K562 (cell line): ENCODE measurements at regions of chr19 and their contacts with region 1.

Region 1: GRCh38 chr19:53849237-53849676 is 18.4 kb upstream of the MYADM start:
- DNase-seq: no peak
- ATAC-seq: no peak
- H3K4me3 ChIP-seq: no peak overlapping the region
- H3K27ac ChIP-seq: no peak overlapping the region
- H3K4me1 ChIP-seq: no peaks in the 10 kb centered on the region; a peak in 1 of 5 replicates
- H3K27me3 ChIP-seq: peaks cover 3 to 23% of the 10 kb centered on the region in 2 experiments; a peak in 4 of 5 replicates
- CTCF ChIP-seq: no peak
- EP300 ChIP-seq: no peak
- POLR2A ChIP-seq: no peak
- RAD21 ChIP-seq: no peak

Region 2: GRCh38 chr19:53646144-53646543 is 203.1 kb before region 1 on chr19:
- CTCF ChIA-PET with region 1: no interaction called
- POLR2A ChIA-PET with region 1: no interaction called
- in situ Hi-C with region 1: no loop called
- intact Hi-C with region 1: no loop called
- DNase-seq: no peak
- ATAC-seq: no peak
- H3K4me3 ChIP-seq: no peak overlapping the region
- H3K27ac ChIP-seq: no peak overlapping the region
- H3K4me1 ChIP-seq: no peaks in the 10 kb centered on the region
- H3K27me3 ChIP-seq: peaks cover 0 to 4% of the 10 kb centered on the region in 2 experiments; a peak in 2 of 5 replicates
- CTCF ChIP-seq: no peak
- EP300 ChIP-seq: no peak
- POLR2A ChIP-seq: no peak
- RAD21 ChIP-seq: no peak

Region 3: GRCh38 chr19:53792721-53793433 is 56.4 kb before region 1 on chr19:
- CTCF ChIA-PET with region 1: no interaction called
- POLR2A ChIA-PET with region 1: no interaction called
- in situ Hi-C with region 1: no loop called
- intact Hi-C with region 1: loop called (anchors 10 kb)
- DNase-seq: peak; percentile 85 to 91 (median 88)
- ATAC-seq: peak; percentile 100
- H3K4me3 ChIP-seq: no peak overlapping the region
- H3K27ac ChIP-seq: no peak overlapping the region
- H3K4me1 ChIP-seq: peaks cover 0 to 2% of the 10 kb centered on the region in 2 experiments; a peak in 2 of 5 replicates
- H3K27me3 ChIP-seq: peaks cover 5 to 31% of the 10 kb centered on the region in 2 experiments; a peak in 3 of 5 replicates
- CTCF ChIP-seq: peak; percentile 99
- EP300 ChIP-seq: no peak
- POLR2A ChIP-seq: no peak
- RAD21 ChIP-seq: peak; percentile 70 to 91

Region 4: DNA sequence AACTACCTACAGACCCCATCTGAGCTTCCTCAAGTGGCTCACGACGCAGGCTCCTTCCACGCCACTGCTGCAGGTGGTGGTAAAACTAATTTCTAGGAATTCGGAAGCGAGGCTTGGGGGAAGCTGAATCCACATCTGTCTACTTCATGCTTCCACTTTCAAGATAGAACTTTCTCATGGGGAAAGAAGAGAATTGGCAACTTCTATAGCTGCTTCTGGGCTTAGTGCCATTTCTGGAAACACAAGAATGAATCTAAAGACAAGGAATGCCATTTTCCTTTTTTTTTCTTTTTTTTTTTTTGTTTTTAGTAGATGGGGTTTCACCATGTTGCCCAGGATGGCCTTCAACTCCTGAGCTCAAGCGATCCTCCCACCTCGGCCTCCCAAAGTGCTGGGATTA is 22.4 kb before region 1 on chr19:
- CTCF ChIA-PET with region 1: no interaction called
- POLR2A ChIA-PET with region 1: no interaction called
- in situ Hi-C with region 1: no loop called
- intact Hi-C with region 1: no loop called
- DNase-seq: no peak
- ATAC-seq: no peak
- H3K4me3 ChIP-seq: no peak overlapping the region
- H3K27ac ChIP-seq: no peak overlapping the region
- H3K4me1 ChIP-seq: no peaks in the 10 kb centered on the region; a peak in 1 of 5 replicates
- H3K27me3 ChIP-seq: peaks cover 13 to 49% of the 10 kb centered on the region in 2 experiments; a peak in 4 of 5 replicates
- CTCF ChIP-seq: no peak
- EP300 ChIP-seq: no peak
- POLR2A ChIP-seq: no peak
- RAD21 ChIP-seq: no peak

Region 5: GRCh38 chr19:53912653-53913052 is 63.4 kb after region 1 on chr19:
- CTCF ChIA-PET with region 1: no interaction called
- POLR2A ChIA-PET with region 1: no interaction called
- in situ Hi-C with region 1: no loop called
- intact Hi-C with region 1: loop called (anchors 10 kb)
- DNase-seq: peak; percentile 63 to 70 (median 70)
- ATAC-seq: peak; percentile 82
- H3K4me3 ChIP-seq: no peak overlapping the region
- H3K27ac ChIP-seq: no peak overlapping the region
- H3K4me1 ChIP-seq: peaks cover 0 to 17% of the 10 kb centered on the region in 2 experiments; a peak in 2 of 5 replicates
- H3K27me3 ChIP-seq: peaks cover 18 to 53% of the 10 kb centered on the region in 2 experiments; a peak in 4 of 5 replicates
- CTCF ChIP-seq: peak; percentile 72 to 83 (median 82)
- EP300 ChIP-seq: no peak
- POLR2A ChIP-seq: no peak
- RAD21 ChIP-seq: peak in 1 of 2 experiments; percentile 50; a peak in 2 of 4 replicates

Region 6: DNA sequence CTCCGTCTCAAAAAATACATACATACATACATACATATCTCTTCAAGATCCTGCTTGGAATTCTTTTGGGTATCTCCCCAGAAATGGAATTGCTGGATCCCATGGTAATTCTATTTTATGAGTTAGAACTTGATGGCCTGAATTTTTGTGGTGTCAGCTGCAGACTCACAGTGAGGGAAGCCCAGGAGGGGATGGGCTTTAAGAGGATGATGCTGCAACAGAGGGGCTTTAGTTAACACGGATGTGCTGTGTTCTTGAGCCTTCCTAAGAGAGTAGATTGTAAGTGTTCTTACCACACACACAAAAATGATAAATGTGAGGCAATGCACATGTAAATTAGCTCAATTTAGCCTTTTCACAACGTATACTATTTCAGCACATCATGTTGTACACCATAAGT is 173.9 kb after region 1 on chr19:
- CTCF ChIA-PET with region 1: interaction called, 3 read pairs
- POLR2A ChIA-PET with region 1: no interaction called
- in situ Hi-C with region 1: loop called (anchors 5 kb)
- intact Hi-C with region 1: no loop called
- DNase-seq: no peak
- ATAC-seq: no peak
- H3K4me3 ChIP-seq: no peak overlapping the region
- H3K27ac ChIP-seq: no peak overlapping the region
- H3K4me1 ChIP-seq: peaks cover 6 to 12% of the 10 kb centered on the region in 2 experiments; a peak in 3 of 5 replicates
- H3K27me3 ChIP-seq: peaks cover 0 to 6% of the 10 kb centered on the region in 2 experiments; a peak in 1 of 5 replicates
- CTCF ChIP-seq: no peak
- EP300 ChIP-seq: no peak
- POLR2A ChIP-seq: no peak
- RAD21 ChIP-seq: no peak